Gastrocnemius medialis (tissue), 4 donors: ENCODE measurements at regions of chr6 and their contacts with region 1.

Region 1: DNA sequence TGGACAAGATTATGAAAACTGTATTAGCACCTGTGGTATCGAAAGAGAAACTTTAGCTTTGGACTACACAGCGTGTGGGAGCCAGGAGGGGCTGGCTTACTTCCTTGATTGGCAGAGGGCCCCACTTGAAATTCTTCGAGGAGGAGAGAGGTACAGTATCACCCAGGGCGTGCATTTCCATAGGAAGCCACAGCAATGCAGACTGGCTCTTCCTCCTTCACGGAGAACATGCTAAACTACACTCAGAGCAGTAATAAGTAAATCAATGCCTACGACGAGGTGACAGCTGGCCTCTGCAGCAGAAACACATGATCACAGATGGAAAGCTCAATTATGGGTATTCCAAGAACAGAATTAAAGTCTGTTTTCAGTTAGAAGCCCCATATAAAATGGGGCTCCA is 44.2 kb downstream of the MYLK4 start:
- DNase-seq: no peak
- ATAC-seq: no peak
- H3K4me3 ChIP-seq: no peak overlapping the region
- H3K27ac ChIP-seq: peak overlapping the region in 1 of 4 donors; percentile 64
- H3K4me1 ChIP-seq: peaks cover 12 to 13% of the 10 kb centered on the region in 2 donors
- H3K27me3 ChIP-seq: no peaks in the 10 kb centered on the region
- CTCF ChIP-seq: no peak
- POLR2A ChIP-seq: no peak

Region 2: DNA sequence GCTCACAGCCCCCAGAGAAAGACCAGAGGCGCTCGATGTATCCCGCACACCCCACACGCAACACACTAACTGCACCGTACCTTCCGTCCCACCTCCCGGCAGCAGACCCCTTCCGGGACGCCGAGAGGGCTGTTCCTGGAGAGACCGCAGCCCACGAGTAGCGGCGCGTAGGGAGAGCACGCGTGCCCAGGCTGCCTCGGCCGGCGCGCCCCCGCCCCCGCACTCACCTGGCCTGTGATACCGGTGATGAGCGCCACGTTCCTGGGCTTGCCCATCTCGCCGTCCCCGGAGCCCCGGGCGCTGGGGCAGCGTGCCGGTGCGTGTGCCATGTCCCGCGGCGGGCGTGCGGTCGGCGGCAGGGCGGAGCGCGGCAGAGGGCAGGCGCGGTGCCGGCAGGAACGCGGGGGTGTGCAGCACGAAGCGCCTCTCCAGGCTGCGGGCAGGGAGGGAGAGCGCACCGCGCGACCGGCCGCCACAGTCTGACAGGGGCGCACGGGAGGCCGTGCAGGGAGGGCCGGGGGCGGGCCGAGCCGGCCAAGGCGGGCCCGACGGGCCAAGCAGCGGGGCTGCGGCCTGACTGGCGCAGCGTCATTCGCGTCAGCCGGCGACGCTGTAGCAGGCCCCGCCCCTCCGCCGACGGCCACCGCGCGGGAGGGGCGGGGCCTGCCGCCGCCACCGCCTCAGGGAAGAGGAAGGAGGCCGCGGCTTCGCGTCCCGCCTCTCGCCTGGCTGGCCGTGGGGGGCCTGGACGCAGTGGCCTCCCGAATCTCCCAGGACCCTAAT is 461.3 kb before region 1 on chr6 and contains the start of gene GMDS:
- in situ Hi-C with region 1: no loop called
- intact Hi-C with region 1: loop called (anchors 10 kb)
- DNase-seq: peak; percentile 64 to 78
- ATAC-seq: peak; percentile 90
- H3K4me3 ChIP-seq: peak within 1 kb of the TSS; percentile 70 to 96 (median 71)
- H3K27ac ChIP-seq: peak within 1 kb of the TSS; percentile 88 to 96 (median 90)
- H3K4me1 ChIP-seq: peaks cover 5 to 13% of the 10 kb centered on the region in 2 donors
- H3K27me3 ChIP-seq: no peaks in the 10 kb centered on the region
- CTCF ChIP-seq: peak in 1 of 5 experiments; percentile 17
- POLR2A ChIP-seq: peak; percentile 91 to 96
- total RNA-seq, gene GMDS: 3.4 to 7.2 (median 4.6) TPM